ENCODE measurements at regions of chr20 and their contacts with region 1.

Region 1: GRCh38 chr20:50750145-50750671 is 18.8 kb downstream of the PARD6B start:
- DNase-seq: no peak
- H3K4me3 ChIP-seq: no peak overlapping the region
- H3K27ac ChIP-seq: no peak overlapping the region
- H3K4me1 ChIP-seq: no peaks in the 10 kb centered on the region
- H3K27me3 ChIP-seq: peaks cover 3 to 8% of the 10 kb centered on the region in 2 experiments
- CTCF ChIP-seq: no peak
- POLR2A ChIP-seq: no peak

Region 2: DNA sequence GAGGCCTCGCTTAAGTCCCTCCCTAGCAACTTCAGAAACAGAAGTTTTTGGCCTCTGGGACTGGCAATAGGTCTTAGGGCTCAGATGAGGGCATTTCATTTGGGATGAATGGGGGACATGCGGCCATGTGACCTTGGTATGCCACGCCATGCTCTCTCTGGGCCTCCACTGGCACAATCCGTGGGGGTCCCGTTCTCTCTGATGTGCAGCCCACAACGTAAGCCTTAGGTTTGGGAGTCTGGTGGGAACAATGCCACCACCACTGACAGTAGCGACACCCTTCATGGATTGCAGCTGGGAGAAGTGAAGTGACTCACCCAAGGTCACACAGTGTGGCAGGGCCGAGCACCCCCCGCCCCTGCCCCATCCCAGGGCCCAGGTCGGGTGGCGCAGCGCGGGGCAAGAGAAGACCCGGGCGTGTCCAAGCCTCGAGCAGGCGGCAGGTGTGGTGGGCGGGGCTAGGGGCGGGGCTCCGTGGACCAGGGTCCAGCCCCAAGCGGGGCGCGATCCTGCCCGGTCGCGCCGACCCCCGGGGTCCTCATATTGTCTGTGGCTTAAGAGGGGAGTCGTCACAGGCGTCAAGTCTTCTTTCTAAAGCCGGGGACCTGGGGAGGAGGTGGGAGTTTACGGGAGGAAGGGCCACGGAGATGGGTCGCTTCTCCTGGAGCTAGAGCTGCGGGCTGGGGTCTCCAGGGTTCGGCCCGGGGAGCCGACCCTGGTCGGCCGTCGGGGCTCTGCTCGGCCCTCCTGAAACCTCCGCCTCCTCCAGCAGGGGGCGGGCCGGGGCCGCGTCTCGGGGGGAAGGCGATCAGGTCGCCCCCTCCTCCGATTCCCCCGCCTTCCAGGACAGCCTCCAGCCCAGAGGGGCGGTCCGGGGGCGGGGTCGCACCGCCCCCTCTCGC is 560.3 kb before region 1 on chr20:
- CTCF ChIA-PET with region 1: interaction called, 33 read pairs
- POLR2A ChIA-PET with region 1: no interaction called
- dilution Hi-C with region 1: no loop called
- intact Hi-C with region 1: loop called (anchors 2 kb)
- DNase-seq: peak; percentile 71
- H3K4me3 ChIP-seq: peak overlapping the region; percentile 24 to 60 (median 42)
- H3K27ac ChIP-seq: no peak overlapping the region
- H3K4me1 ChIP-seq: peaks cover 12% of the 10 kb centered on the region
- H3K27me3 ChIP-seq: peaks cover 0 to 2% of the 10 kb centered on the region in 2 experiments
- CTCF ChIP-seq: peak; percentile 54 to 88
- POLR2A ChIP-seq: no peak

Region 3: GRCh38 chr20:50625986-50626677 is 124.1 kb before region 1 on chr20:
- CTCF ChIA-PET with region 1: interaction called, 181 read pairs
- POLR2A ChIA-PET with region 1: no interaction called
- dilution Hi-C with region 1: no loop called
- intact Hi-C with region 1: loop called (anchors 2 kb)
- DNase-seq: no peak
- H3K4me3 ChIP-seq: no peak overlapping the region
- H3K27ac ChIP-seq: no peak overlapping the region
- H3K4me1 ChIP-seq: no peaks in the 10 kb centered on the region
- H3K27me3 ChIP-seq: no peaks in the 10 kb centered on the region
- CTCF ChIP-seq: peak; percentile 29
- POLR2A ChIP-seq: no peak

Region 4: DNA sequence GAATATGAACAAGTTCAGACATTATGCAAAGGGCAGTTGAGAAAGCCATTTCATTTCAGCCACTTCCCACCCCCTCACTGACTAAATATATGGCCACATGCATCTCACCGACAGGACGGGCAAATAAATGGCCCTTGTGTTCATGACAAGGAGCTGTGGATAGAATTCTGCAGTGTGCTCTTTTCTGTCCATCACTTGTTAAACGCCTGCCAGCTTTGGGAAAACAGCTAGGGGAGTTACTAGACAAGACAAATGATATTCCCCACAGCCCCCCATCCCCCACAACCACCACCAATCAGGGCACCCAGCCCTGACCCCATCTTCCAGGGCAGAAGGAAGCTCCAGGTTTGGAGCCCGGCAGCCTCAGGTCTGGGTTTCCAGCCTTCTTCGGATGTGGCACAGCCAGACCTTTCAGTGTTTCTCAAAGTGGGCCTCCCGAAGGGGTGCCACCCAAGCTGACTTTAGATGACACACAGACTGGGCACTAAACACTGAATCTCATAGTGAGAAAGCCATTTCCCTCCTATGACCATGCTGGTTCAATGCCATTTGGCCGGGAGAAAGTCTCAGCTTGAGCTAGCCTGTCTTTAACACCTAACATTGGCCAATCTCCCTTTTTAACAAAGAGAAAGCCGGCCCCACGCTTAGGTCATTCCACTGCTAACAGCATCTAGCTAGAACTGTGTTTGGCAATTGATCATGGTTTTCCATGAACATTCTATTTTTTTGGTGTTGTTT is 54.9 kb before region 1 on chr20:
- CTCF ChIA-PET with region 1: interaction called, 17 read pairs
- POLR2A ChIA-PET with region 1: no interaction called
- dilution Hi-C with region 1: no loop called
- intact Hi-C with region 1: no loop called
- DNase-seq: no peak
- H3K4me3 ChIP-seq: no peak overlapping the region
- H3K27ac ChIP-seq: no peak overlapping the region
- H3K4me1 ChIP-seq: no peaks in the 10 kb centered on the region
- H3K27me3 ChIP-seq: peaks cover 28 to 33% of the 10 kb centered on the region in 2 experiments
- CTCF ChIP-seq: no peak
- POLR2A ChIP-seq: no peak

Region 5: DNA sequence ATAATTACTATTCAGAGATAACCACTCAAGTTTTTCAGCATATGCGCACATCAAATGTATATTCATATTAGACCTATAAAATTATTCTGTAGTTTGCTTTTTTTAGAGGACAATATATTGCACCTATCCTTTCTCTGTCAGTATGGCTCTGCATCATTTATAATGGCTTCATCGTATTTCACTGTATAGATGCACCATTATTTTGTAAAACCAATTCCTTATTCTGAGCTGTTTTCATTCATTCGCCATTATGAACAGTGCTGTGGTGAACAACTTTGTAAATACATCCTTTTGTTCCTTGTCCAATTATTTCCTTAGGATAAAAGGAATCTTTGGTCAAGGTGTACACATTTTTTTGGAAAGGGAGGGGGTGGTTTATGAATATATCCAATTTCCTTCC is 15.5 kb after region 1 on chr20:
- CTCF ChIA-PET with region 1: interaction called, 19 read pairs
- POLR2A ChIA-PET with region 1: no interaction called
- dilution Hi-C with region 1: no loop called
- intact Hi-C with region 1: no loop called
- DNase-seq: no peak
- H3K4me3 ChIP-seq: no peak overlapping the region
- H3K27ac ChIP-seq: no peak overlapping the region
- H3K4me1 ChIP-seq: no peaks in the 10 kb centered on the region
- H3K27me3 ChIP-seq: peaks cover 0 to 2% of the 10 kb centered on the region in 2 experiments
- CTCF ChIP-seq: no peak
- POLR2A ChIP-seq: no peak

Region 6: DNA sequence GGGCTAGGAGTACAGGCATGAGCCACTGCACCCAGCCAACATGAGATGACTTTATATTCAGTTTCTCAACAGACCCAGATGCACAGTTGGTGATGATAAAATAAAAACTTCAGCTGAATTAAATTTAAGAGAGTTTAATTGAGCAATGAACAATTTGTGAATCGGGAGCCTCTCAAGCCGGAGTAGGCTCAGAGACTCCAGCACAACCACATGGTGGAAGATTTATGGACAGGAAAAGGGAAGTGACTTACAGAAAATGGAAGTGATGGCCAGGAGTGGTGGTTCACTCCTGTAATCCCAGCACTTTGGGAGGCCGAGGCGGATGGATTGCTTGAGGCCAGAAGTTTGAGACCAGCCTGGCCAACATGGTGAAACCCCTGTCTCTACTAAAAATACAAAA is 34.3 kb after region 1 on chr20:
- CTCF ChIA-PET with region 1: interaction called, 11 read pairs
- POLR2A ChIA-PET with region 1: no interaction called
- dilution Hi-C with region 1: no loop called
- intact Hi-C with region 1: no loop called
- DNase-seq: no peak
- H3K4me3 ChIP-seq: no peak overlapping the region
- H3K27ac ChIP-seq: no peak overlapping the region
- H3K4me1 ChIP-seq: no peaks in the 10 kb centered on the region
- H3K27me3 ChIP-seq: peaks cover 0 to 7% of the 10 kb centered on the region in 2 experiments
- CTCF ChIP-seq: no peak
- POLR2A ChIP-seq: no peak